ENCODE measurements at regions of chr15 and their contacts with region 1.

Region 1: GRCh38 chr15:50051803-50052419 is 67.1 kb downstream of the ATP8B4 start:
- DNase-seq: peak; percentile 19 to 50 (median 22)
- ATAC-seq: peak; percentile 84
- H3K4me3 ChIP-seq: no peak overlapping the region
- H3K27ac ChIP-seq: no peak overlapping the region
- H3K4me1 ChIP-seq: peaks cover 0 to 11% of the 10 kb centered on the region in 2 experiments; a peak in 3 of 5 replicates
- H3K27me3 ChIP-seq: no peaks in the 10 kb centered on the region
- CTCF ChIP-seq: peak; percentile 60 to 73 (median 62)
- EP300 ChIP-seq: no peak
- POLR2A ChIP-seq: no peak
- RAD21 ChIP-seq: peak; percentile 58 to 82

Region 2: DNA sequence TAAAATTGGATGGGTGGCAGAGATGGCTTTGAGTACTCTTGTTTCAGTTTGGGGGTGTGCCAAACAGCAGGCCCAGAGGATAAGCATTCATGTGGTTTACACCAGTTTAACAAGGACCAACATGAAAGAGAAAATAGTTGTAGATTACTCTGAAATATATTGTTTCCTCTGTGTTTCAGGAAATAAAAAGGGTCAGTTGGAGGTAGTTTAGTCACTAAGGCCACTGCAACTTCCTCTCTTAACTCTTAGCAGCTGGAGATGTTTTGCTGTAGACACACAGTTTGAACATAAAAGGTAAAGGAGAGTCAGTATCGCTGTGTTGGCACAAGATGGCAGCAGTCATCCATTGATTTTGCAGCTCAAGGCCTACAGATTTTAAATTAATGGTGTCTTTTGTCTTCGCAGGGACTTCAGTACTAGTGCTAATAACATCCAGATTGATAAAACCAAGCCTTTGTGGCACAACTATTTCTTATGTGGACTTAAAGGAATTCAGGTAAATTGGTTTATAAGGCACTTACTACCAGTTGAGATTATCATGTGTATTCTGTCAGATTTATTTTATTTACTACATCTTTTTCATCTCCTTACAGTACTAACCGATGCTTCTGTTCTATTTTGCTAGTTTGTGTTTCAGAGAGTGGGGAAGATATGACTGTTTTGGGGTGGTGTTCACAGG is 816.3 kb before region 1 on chr15:
- CTCF ChIA-PET with region 1: interaction called, 3 read pairs
- POLR2A ChIA-PET with region 1: no interaction called
- in situ Hi-C with region 1: no loop called
- intact Hi-C with region 1: loop called (anchors 1 kb)
- DNase-seq: peak in 2 of 4 experiments; percentile 15 to 42
- ATAC-seq: peak; percentile 80
- H3K4me3 ChIP-seq: no peak overlapping the region
- H3K27ac ChIP-seq: no peak overlapping the region
- H3K4me1 ChIP-seq: no peaks in the 10 kb centered on the region
- H3K27me3 ChIP-seq: no peaks in the 10 kb centered on the region
- CTCF ChIP-seq: peak; percentile 21 to 61 (median 51); a peak in 4 of 6 replicates
- EP300 ChIP-seq: no peak
- POLR2A ChIP-seq: no peak
- RAD21 ChIP-seq: peak; percentile 60 to 67

Region 3: DNA sequence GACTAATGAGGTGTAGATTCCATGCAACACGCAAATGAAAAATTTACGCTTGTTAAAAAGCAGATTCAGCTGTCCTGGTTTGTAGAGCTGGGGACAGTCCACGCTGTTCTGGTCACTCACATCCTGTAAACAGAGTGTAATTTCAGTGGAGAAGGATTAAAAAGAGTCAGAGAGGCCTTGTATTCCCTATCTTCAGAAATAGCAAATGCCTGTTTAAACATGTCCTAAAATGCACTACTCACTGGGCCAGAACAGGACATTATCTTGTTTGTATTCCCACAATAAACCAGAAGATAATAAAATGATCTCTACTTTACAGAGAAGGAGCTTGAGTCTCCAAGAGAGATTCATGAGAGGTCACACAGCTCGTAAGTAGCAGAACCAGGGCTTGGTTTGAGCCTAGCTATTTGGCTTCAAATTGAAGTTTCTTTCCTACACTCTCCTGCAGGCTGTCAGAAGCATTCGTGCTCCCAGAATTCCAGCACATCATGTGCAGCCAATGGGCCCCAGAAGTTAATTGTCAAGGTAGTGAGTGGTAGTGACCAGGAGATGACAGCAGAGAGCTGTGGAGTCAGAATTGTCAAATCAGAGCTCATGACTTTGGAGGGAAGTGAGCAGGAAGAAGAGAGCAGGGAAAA is 175.4 kb before region 1 on chr15:
- CTCF ChIA-PET with region 1: no interaction called
- POLR2A ChIA-PET with region 1: no interaction called
- in situ Hi-C with region 1: no loop called
- intact Hi-C with region 1: loop called (anchors 5 kb)
- DNase-seq: peak in 2 of 4 experiments; percentile 6 to 8
- ATAC-seq: peak; percentile 40; the same call in 2 of the 3 replicates
- H3K4me3 ChIP-seq: no peak overlapping the region
- H3K27ac ChIP-seq: no peak overlapping the region
- H3K4me1 ChIP-seq: no peaks in the 10 kb centered on the region
- H3K27me3 ChIP-seq: no peaks in the 10 kb centered on the region
- CTCF ChIP-seq: peak; percentile 33 to 52 (median 38); a peak in 4 of 6 replicates
- EP300 ChIP-seq: no peak
- POLR2A ChIP-seq: no peak
- RAD21 ChIP-seq: peak; percentile 60 to 69

Region 4: DNA sequence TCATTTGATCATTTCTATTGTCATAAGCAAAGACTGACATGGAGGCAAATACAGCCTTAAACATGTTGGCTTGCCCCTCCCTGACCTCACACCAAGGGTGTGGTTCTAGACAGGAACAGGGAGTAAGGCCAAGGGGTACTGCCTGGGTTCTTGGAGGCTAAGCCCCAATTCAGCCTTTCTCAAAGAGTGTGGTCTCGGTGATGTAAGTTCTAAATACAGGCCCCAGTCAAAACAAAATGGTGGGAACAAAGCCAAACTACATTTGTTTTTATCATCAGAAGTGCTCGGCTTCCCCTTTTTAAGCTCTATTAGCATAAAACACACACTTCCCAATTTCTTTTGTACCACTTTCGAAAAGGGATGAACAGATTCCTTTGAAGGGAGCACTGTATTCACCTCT is 62.4 kb before region 1 on chr15:
- CTCF ChIA-PET with region 1: no interaction called
- POLR2A ChIA-PET with region 1: no interaction called
- in situ Hi-C with region 1: no loop called
- intact Hi-C with region 1: no loop called
- DNase-seq: no peak
- ATAC-seq: no peak
- H3K4me3 ChIP-seq: no peak overlapping the region
- H3K27ac ChIP-seq: no peak overlapping the region
- H3K4me1 ChIP-seq: no peaks in the 10 kb centered on the region; a peak in 1 of 5 replicates
- H3K27me3 ChIP-seq: no peaks in the 10 kb centered on the region; a peak in 1 of 5 replicates
- CTCF ChIP-seq: no peak
- EP300 ChIP-seq: no peak
- POLR2A ChIP-seq: no peak
- RAD21 ChIP-seq: no peak

Measured in K562 (cell line).